Sigmoid colon (tissue), 7 donors: ENCODE measurements at regions of chr7 and their contacts with region 1.

Region 1: DNA sequence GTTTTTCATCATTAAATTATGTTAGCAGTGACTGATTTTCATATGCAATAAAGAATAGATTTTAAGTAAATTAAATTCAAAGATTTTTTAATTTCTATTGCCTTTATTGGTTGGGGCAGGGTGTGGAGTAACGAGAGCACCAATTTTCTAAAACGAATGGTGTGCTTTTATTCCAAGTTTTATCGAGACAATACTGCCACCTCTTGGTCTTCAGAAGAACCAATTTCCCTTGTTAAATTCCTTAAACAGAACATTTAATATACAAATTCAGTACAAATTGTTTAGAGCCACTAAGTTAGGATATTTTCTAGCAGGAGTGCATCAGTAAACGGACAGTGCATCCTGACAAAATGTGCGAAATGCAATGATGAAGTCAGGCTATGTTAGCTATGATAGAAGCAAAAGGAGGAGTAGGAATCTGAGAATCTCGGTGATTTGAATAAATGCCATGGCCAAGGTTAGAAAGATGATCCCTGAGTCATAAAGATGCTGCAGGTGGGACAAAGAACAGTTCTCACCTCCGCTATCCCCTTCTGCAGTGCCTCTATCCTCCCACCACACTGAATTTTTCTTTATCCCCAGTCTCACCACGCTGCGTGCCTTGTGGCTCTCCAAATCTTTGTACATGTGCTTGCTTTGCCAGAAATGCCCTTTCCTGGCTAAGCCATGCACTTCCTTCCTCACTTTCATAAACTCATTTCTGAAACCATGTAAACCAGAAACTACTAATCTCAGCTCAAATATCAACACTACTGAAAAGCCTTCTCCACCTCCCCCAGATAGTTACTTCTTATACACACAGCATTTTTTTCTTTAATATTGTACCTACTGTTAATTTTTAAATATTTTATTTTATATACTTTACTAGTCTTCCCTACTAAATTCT is 31.9 kb upstream of the AGBL3 start:
- DNase-seq: no peak
- H3K4me3 ChIP-seq: no peak overlapping the region
- H3K27ac ChIP-seq: peak overlapping the region; percentile 4 to 60 (median 38)
- H3K4me1 ChIP-seq: peaks cover 0 to 5% (median 2%) of the 10 kb centered on the region in 4 donors
- H3K27me3 ChIP-seq: no peaks in the 10 kb centered on the region
- CTCF ChIP-seq: peak in 2 of 4 experiments; percentile 43 to 47
- EP300 ChIP-seq: no peak
- POLR2A ChIP-seq: no peak

Region 2: GRCh38 chr7:134444198-134444871 is 510.1 kb before region 1 on chr7:
- intact Hi-C with region 1: loop called (anchors 5 kb)
- DNase-seq: no peak
- H3K4me3 ChIP-seq: no peak overlapping the region
- H3K27ac ChIP-seq: no peak overlapping the region
- H3K4me1 ChIP-seq: no peaks in the 10 kb centered on the region
- H3K27me3 ChIP-seq: no peaks in the 10 kb centered on the region
- CTCF ChIP-seq: no peak
- EP300 ChIP-seq: no peak
- POLR2A ChIP-seq: no peak